GM12878 (cell line): ENCODE measurements at regions of chr2 and their contacts with region 1.

Region 1: GRCh38 chr2:85999061-85999831 is 106.4 kb downstream of the POLR1A start:
- DNase-seq: peak; percentile 77
- ATAC-seq: peak; percentile 87
- H3K4me3 ChIP-seq: peak overlapping the region; percentile 10; the same call in 1 of the 2 replicates
- H3K27ac ChIP-seq: peak overlapping the region; percentile 93
- H3K4me1 ChIP-seq: peaks cover 63% of the 10 kb centered on the region
- H3K27me3 ChIP-seq: no peaks in the 10 kb centered on the region
- CTCF ChIP-seq: no peak
- EP300 ChIP-seq: no peak
- POLR2A ChIP-seq: peak; percentile 64
- RAD21 ChIP-seq: no peak

Region 2: GRCh38 chr2:85852937-85853498 is 146.2 kb before region 1 on chr2:
- CTCF ChIA-PET with region 1: interaction called, 13 read pairs
- POLR2A ChIA-PET with region 1: interaction called, 5 read pairs
- RAD21 ChIA-PET with region 1: interaction called, 14 read pairs
- SMC1A ChIA-PET with region 1: interaction called, 30 read pairs
- in situ Hi-C with region 1: no loop called
- intact Hi-C with region 1: loop called (anchors 1 kb)
- DNase-seq: peak; percentile 88
- ATAC-seq: peak; percentile 84
- H3K4me3 ChIP-seq: peak overlapping the region; percentile 51; the same call in 1 of the 2 replicates
- H3K27ac ChIP-seq: peak overlapping the region; percentile 84
- H3K4me1 ChIP-seq: peaks cover 49% of the 10 kb centered on the region
- H3K27me3 ChIP-seq: no peaks in the 10 kb centered on the region
- CTCF ChIP-seq: no peak
- EP300 ChIP-seq: peak; percentile 5 to 51; a peak in 1 of 4 replicates
- POLR2A ChIP-seq: peak; percentile 57; the same call in 1 of the 2 replicates
- RAD21 ChIP-seq: no peak

Region 3: GRCh38 chr2:85865539-85866164 is 133.6 kb before region 1 on chr2:
- CTCF ChIA-PET with region 1: interaction called, 3 read pairs
- POLR2A ChIA-PET with region 1: interaction called, 3 read pairs
- RAD21 ChIA-PET with region 1: interaction called, 7 read pairs
- SMC1A ChIA-PET with region 1: interaction called, 4 read pairs
- in situ Hi-C with region 1: no loop called
- intact Hi-C with region 1: loop called (anchors 1 kb)
- DNase-seq: peak; percentile 62
- ATAC-seq: peak; percentile 90
- H3K4me3 ChIP-seq: no peak overlapping the region; the same call in 1 of the 2 replicates
- H3K27ac ChIP-seq: no peak overlapping the region
- H3K4me1 ChIP-seq: peaks cover 24% of the 10 kb centered on the region
- H3K27me3 ChIP-seq: no peaks in the 10 kb centered on the region
- CTCF ChIP-seq: no peak
- EP300 ChIP-seq: peak in 1 of 2 experiments; percentile 58; a peak in 1 of 4 replicates
- POLR2A ChIP-seq: no peak
- RAD21 ChIP-seq: peak; percentile 7; the same call in 1 of the 2 replicates

Region 4: DNA sequence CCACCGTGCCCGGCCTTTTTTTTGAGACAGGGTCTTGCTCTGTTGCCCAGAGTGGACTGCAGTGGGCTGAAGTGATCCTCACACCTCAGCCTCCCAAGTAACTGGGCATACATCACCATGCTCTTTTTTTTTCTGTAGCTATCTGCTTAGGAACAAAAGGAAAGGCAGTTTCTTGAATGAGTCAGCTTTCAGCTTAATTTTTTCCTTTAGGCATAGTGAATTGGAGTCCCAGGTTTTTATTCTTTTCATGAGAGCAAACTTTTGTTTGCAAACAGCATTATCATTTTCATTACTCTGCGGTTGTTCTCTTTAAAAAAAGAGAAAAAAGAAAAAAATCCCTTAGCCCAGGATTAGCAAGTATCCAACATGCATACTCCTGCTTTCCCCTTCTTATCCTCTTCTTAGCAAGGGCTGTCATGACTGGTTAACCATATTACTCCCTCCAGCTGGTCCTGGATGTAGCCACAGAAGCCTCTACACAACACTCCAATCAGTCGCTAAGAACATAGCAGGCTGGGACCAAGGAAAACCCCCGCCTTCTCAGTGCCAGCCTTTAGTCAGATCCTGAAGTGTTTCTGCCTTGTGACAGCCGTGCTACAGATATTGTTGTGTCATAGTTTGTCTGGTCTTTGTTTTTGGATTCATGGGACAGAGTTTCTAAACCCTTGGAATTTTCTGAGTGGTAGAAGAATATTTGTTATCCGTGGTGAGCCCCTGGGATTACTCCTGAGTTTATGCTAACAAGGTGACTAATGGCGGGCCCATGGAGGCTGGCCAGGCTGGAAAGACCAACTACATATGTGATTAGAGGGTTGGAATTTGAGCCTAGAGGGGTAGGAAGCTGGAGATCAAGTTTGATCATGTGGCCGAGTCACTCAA is 87.2 kb before region 1 on chr2:
- CTCF ChIA-PET with region 1: no interaction called
- POLR2A ChIA-PET with region 1: no interaction called
- RAD21 ChIA-PET with region 1: interaction called, 12 read pairs
- SMC1A ChIA-PET with region 1: no interaction called
- in situ Hi-C with region 1: no loop called
- intact Hi-C with region 1: no loop called
- DNase-seq: no peak
- ATAC-seq: peak; percentile 45
- H3K4me3 ChIP-seq: no peak overlapping the region
- H3K27ac ChIP-seq: no peak overlapping the region
- H3K4me1 ChIP-seq: no peaks in the 10 kb centered on the region
- H3K27me3 ChIP-seq: no peaks in the 10 kb centered on the region
- CTCF ChIP-seq: no peak
- EP300 ChIP-seq: no peak
- POLR2A ChIP-seq: no peak
- RAD21 ChIP-seq: no peak

Region 5: DNA sequence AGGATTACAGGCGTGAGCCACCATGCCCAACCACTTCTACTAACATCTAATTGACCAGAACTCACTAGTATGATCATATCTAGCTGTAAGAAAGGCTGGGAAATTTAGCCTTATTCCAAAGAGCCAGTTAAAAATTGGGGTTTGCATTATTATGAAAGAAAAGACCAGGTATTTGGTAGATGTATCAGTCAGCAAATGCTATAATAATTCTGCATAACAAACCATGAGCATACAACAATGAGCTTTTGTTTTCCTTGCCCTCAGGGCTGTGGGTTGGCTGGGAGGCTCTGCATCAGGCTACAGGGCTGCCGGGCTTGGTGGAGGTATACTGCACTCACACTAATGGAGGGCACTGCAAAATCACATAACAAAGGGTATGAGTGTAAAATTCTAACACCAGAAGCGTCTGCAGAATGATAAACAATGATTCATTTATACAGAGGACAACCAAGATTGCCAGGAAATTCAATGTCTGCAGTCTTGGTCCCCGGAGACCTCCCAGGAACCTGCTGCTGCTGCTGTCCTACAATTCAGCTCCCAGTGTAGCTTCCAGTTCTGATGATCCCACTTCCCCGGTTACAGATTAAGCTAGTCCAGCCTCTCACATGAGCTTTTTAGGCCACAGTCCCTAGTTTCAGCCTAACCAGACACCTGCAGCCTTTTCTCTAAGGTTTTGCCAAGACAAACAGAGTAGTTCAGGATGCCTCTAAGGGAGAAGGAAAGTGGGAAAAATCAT is 78.3 kb before region 1 on chr2:
- CTCF ChIA-PET with region 1: no interaction called
- POLR2A ChIA-PET with region 1: interaction called, 9 read pairs
- RAD21 ChIA-PET with region 1: interaction called, 12 read pairs
- SMC1A ChIA-PET with region 1: interaction called, 10 read pairs
- in situ Hi-C with region 1: no loop called
- intact Hi-C with region 1: no loop called
- DNase-seq: no peak
- ATAC-seq: no peak
- H3K4me3 ChIP-seq: no peak overlapping the region
- H3K27ac ChIP-seq: no peak overlapping the region
- H3K4me1 ChIP-seq: peaks cover 9% of the 10 kb centered on the region
- H3K27me3 ChIP-seq: no peaks in the 10 kb centered on the region
- CTCF ChIP-seq: no peak
- EP300 ChIP-seq: no peak
- POLR2A ChIP-seq: no peak
- RAD21 ChIP-seq: no peak

Region 6: GRCh38 chr2:85978883-85979780 is 20.1 kb before region 1 on chr2:
- CTCF ChIA-PET with region 1: interaction called, 3 read pairs
- POLR2A ChIA-PET with region 1: interaction called, 3 read pairs
- RAD21 ChIA-PET with region 1: interaction called, 6 read pairs
- SMC1A ChIA-PET with region 1: interaction called, 10 read pairs
- in situ Hi-C with region 1: no loop called
- intact Hi-C with region 1: no loop called
- DNase-seq: no peak
- ATAC-seq: peak; percentile 72
- H3K4me3 ChIP-seq: no peak overlapping the region
- H3K27ac ChIP-seq: no peak overlapping the region
- H3K4me1 ChIP-seq: peaks cover 7% of the 10 kb centered on the region
- H3K27me3 ChIP-seq: no peaks in the 10 kb centered on the region
- CTCF ChIP-seq: no peak
- EP300 ChIP-seq: no peak
- POLR2A ChIP-seq: no peak
- RAD21 ChIP-seq: no peak

Region 7: DNA sequence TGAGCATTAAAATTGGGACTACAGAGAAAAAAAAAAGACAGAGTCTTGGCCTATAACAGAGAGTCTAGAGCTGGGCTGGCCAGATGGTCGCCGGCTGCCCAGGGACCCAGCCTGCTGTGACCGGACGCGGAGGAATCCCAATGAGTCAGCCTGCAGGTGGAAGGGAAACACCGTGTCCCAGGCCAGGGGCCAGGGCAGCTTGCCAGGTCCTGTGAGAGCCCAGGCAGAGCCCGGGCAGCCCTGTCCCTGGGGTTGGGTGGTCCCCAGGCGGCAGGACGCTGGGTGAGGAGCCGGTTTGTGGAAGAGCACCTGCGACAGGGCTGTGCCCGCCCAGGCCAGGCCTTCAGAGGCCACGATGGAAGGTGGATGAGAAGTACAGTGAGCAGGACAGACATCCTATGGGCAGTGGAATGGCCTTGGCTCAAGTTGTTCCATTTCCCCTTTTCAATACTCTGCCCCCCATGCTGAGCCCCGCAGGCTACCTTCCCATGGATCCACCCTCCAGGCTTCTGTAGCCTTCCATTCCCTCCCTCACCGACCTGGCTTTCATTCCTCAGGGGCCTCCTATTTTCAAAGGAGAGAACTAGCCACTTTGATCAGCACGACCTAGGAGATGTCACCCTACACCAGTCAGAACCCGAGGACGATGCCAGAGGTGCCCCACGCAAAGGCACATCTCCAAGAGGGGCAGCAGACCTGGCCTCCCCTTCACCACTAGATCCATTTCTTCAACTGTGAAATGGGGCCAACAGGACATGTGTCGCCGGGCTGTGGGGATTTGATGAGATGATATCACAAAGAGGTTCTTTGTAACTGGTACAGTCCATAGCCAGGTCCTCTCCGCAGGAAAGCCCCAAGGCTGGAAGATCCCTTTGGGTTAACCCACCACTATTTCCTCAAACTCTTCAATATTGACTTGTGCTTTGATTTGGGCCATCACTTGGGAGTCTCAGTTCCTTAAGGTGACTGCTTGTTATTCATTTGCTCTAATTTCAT is 19.0 kb after region 1 on chr2:
- CTCF ChIA-PET with region 1: interaction called, 18 read pairs
- POLR2A ChIA-PET with region 1: interaction called, 97 read pairs
- RAD21 ChIA-PET with region 1: interaction called, 132 read pairs
- SMC1A ChIA-PET with region 1: interaction called, 106 read pairs
- in situ Hi-C with region 1: no loop called
- intact Hi-C with region 1: loop called (anchors 2 kb)
- DNase-seq: no peak
- ATAC-seq: peak; percentile 71
- H3K4me3 ChIP-seq: no peak overlapping the region
- H3K27ac ChIP-seq: peak overlapping the region; percentile 60
- H3K4me1 ChIP-seq: peaks cover 20% of the 10 kb centered on the region
- H3K27me3 ChIP-seq: no peaks in the 10 kb centered on the region
- CTCF ChIP-seq: no peak
- EP300 ChIP-seq: peak; percentile 22 to 68; a peak in 1 of 4 replicates
- POLR2A ChIP-seq: no peak
- RAD21 ChIP-seq: no peak

Region 8: GRCh38 chr2:86087936-86088850 is 88.9 kb after region 1 on chr2:
- CTCF ChIA-PET with region 1: no interaction called
- POLR2A ChIA-PET with region 1: no interaction called
- RAD21 ChIA-PET with region 1: no interaction called
- SMC1A ChIA-PET with region 1: no interaction called
- in situ Hi-C with region 1: no loop called
- intact Hi-C with region 1: no loop called
- DNase-seq: no peak
- ATAC-seq: no peak
- H3K4me3 ChIP-seq: no peak overlapping the region
- H3K27ac ChIP-seq: no peak overlapping the region
- H3K4me1 ChIP-seq: no peaks in the 10 kb centered on the region
- H3K27me3 ChIP-seq: no peaks in the 10 kb centered on the region
- CTCF ChIP-seq: peak; percentile 23 to 48 (median 44); a peak in 3 of 6 replicates
- EP300 ChIP-seq: no peak
- POLR2A ChIP-seq: no peak
- RAD21 ChIP-seq: peak; percentile 26; the same call in 1 of the 2 replicates